ENCODE measurements at regions of chr16 and their contacts with region 1.

Region 1: DNA sequence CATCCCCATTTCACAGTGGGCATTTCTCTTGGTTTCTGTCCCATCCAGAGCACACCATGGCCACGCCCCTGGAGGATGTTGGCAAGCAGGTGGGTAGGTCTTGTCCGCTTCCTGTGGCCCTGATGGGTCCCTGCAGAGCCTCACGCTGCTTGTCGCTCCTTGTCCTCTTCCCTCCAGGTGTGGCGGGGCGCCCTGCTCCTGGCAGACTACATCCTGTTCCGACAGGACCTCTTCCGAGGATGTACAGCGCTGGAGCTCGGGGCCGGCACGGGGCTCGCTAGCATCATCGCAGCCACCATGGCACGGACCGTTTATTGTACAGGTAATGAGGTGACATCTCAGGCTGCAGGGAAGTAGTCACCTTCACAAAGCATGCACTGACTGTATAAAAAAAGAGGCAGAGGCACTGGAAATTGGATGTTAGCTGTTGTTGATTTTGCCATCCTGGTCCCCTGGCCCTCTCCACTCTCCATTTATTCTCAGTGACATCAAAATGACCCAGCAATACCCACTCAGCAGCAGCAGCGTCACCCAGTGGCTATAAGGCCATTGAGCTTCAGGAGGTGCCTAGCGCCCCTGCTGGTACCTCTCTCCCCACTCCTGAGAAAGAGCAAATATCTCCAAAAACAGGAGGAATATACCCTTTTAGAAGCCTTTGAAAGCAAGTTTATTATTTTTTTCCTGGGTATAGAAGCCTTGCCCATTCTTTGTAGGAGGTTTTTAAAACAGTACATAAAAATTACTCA is 13.7 kb downstream of the METTL22 start:
- DNase-seq: peak; percentile 43 to 68
- H3K4me3 ChIP-seq: no peak overlapping the region
- H3K27ac ChIP-seq: no peak overlapping the region
- H3K4me1 ChIP-seq: no peaks in the 10 kb centered on the region
- H3K27me3 ChIP-seq: no peaks in the 10 kb centered on the region
- CTCF ChIP-seq: peak; percentile 98 to 100 (median 99)
- EP300 ChIP-seq: no peak
- POLR2A ChIP-seq: no peak
- RAD21 ChIP-seq: peak; percentile 89 to 90

Region 2: DNA sequence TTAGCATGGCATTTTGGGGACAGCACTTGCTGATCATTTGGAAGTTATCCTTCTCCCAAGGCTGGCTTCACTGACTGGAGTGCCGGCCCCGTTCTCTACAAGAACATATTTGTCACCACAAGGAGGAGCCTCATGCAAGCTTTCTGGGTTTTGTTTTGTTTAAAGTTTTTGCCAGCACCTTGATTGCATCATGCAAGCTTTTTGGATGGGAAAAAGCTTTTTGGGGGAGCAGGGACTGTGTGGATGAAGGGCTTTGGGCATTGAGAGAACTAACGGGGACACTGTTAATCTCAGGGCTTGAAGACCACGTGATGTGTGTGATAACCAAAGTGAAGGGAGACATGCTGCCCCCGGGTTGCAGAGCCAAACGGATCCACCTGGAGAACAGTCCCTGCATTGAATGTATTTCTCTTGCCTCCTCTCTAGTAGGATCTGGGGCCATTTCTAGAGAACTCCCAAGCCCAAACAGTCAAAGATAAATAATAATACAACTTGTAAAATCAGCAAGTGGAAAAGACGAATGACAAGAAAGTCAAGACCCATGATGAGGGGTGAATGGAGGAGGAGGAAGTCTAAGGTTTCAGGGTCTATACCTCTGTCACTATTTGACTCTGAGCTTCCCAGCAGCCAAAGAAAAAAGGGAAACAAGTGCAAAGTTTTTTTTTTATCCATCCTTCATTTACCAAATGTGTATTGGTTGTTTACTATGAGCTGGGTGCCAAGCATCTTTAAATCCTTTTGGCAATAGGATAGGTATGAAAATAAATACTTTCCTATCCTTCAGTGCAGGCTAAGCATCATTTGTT is 62.0 kb before region 1 on chr16:
- CTCF ChIA-PET with region 1: interaction called, 416 read pairs
- POLR2A ChIA-PET with region 1: interaction called, 13 read pairs
- DNase-seq: peak in 1 of 2 experiments; percentile 69
- H3K4me3 ChIP-seq: no peak overlapping the region
- H3K27ac ChIP-seq: no peak overlapping the region
- H3K4me1 ChIP-seq: peaks cover 2 to 28% (median 6%) of the 10 kb centered on the region in 4 experiments; a peak in 6 of 7 replicates
- H3K27me3 ChIP-seq: no peaks in the 10 kb centered on the region; a peak in 2 of 7 replicates
- CTCF ChIP-seq: peak; percentile 20 to 89 (median 69)
- EP300 ChIP-seq: no peak
- POLR2A ChIP-seq: no peak; a peak in 1 of 3 replicates
- RAD21 ChIP-seq: peak; percentile 81 to 85

Region 3: GRCh38 chr16:8589057-8589899 is 45.9 kb before region 1 on chr16:
- CTCF ChIA-PET with region 1: interaction called, 19 read pairs
- POLR2A ChIA-PET with region 1: interaction called, 3 read pairs
- DNase-seq: peak in 1 of 2 experiments; percentile 78
- H3K4me3 ChIP-seq: peak overlapping the region; percentile 52 to 69 (median 60)
- H3K27ac ChIP-seq: no peak overlapping the region
- H3K4me1 ChIP-seq: peaks cover 0 to 12% (median 5%) of the 10 kb centered on the region in 4 experiments; a peak in 3 of 7 replicates
- H3K27me3 ChIP-seq: peaks cover 10 to 33% (median 21%) of the 10 kb centered on the region in 4 experiments
- CTCF ChIP-seq: peak in 2 of 3 experiments; percentile 8 to 12; a peak in 2 of 4 replicates
- EP300 ChIP-seq: no peak
- POLR2A ChIP-seq: no peak
- RAD21 ChIP-seq: no peak

Region 4: GRCh38 chr16:8614435-8615029 is 20.6 kb before region 1 on chr16:
- CTCF ChIA-PET with region 1: interaction called, 11 read pairs
- POLR2A ChIA-PET with region 1: interaction called, 4 read pairs
- DNase-seq: no peak
- H3K4me3 ChIP-seq: no peak overlapping the region
- H3K27ac ChIP-seq: no peak overlapping the region
- H3K4me1 ChIP-seq: no peaks in the 10 kb centered on the region
- H3K27me3 ChIP-seq: no peaks in the 10 kb centered on the region; a peak in 2 of 7 replicates
- CTCF ChIP-seq: no peak
- EP300 ChIP-seq: no peak
- POLR2A ChIP-seq: no peak
- RAD21 ChIP-seq: no peak

Region 5: DNA sequence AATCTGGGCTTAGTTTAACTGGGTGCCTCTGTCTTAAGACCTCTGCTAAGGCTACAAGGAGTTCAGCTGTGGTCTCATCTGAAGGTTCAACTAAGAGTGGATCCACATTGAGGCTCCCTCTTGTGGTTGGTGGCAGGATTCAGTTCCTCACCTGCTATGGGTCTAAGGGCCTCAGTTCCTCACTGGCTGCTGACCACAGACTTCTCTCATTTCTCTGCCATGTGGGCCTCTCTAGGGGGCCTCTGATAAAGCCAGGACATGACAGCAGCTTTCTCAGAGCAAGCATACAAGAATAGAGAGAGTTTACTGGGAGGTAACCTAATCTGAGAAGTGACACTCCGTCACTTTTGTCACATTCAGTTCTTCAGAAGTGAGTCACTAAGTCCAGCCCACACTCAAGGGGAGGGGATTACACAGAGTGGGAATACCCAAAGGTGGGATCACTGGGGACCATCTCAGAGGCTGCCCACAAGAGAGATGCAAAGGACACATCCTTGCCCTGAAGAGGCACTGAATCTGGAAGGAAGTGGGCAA is 20.1 kb after region 1 on chr16:
- CTCF ChIA-PET with region 1: interaction called, 63 read pairs
- POLR2A ChIA-PET with region 1: interaction called, 3 read pairs
- DNase-seq: no peak
- H3K4me3 ChIP-seq: no peak overlapping the region
- H3K27ac ChIP-seq: no peak overlapping the region
- H3K4me1 ChIP-seq: no peaks in the 10 kb centered on the region
- H3K27me3 ChIP-seq: no peaks in the 10 kb centered on the region
- CTCF ChIP-seq: peak; percentile 41 to 64 (median 59)
- EP300 ChIP-seq: no peak
- POLR2A ChIP-seq: no peak
- RAD21 ChIP-seq: peak; percentile 45 to 53

Region 6: DNA sequence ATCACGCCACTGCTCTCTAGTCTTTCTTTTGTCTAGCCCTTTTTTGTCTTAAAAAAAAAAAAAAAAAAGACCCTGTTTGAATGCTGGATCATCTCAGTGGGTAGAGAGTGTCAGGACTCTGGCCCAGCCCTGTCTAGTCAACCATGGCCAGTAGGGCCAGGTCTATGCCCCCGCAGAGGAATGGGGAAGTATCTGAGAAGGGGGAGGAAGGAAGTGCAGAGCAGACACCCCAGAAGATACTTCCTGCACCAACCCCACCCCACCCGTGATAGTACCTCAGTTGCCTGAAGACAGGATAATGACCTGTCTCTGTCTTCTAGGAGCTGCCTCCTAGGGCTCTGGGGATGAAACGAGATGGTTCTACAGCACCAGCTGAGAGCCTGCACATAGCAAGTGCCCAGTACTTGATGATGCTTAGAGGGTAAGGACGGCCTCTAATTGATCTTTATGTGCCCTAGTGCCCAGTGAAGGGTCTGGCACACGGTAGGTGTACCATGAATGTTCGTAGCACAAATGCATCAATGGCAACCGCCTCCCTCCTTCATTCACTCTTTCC is 94.7 kb after region 1 on chr16:
- CTCF ChIA-PET with region 1: no interaction called
- POLR2A ChIA-PET with region 1: no interaction called
- DNase-seq: no peak
- H3K4me3 ChIP-seq: no peak overlapping the region
- H3K27ac ChIP-seq: no peak overlapping the region
- H3K4me1 ChIP-seq: no peaks in the 10 kb centered on the region
- H3K27me3 ChIP-seq: no peaks in the 10 kb centered on the region
- CTCF ChIP-seq: no peak
- EP300 ChIP-seq: no peak
- POLR2A ChIP-seq: no peak
- RAD21 ChIP-seq: no peak